Activated CD8-positive, alpha-beta T cell treated with anti-CD3 and anti-CD28 coated beads for 36 hours (primary cell): ENCODE measurements at regions of chr20 and their contacts with region 1.

Region 1: DNA sequence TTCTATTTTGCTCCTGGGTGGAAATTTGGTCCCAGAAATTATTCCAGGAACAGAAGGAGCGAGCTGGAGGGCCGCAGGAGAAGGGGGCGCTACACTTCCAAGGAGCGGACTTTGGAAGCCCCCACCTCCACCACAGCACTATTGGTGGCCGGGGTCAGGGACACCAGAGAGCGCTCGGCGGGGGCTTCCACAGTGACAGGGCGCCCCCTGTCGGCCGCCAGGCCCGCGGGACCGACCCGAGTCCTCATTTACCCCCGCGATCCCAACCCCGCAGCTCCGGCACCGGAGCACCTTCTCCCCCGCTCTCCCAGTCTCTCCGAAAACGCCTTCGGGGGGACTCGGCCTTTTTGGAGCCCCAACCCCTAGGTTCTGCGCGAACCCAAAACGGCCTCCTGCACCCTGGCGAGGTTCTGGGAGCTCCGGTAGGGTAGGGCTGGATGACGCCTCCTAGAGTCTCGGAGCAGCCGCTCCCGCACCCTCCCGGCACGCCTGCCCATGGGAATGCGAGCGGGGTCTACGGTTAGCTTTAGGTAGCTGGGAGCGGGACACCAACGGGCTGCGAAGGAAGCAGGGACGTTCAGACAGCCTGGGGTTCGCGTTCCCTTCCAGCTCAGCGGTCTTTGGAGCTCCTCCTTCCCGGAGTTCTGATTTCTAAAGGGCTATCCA is 2.4 kb upstream of the FOXA2 start:
- DNase-seq: peak; percentile 45
- ATAC-seq: no peak
- H3K4me3 Mint-ChIP-seq: no peak overlapping the region
- H3K27ac Mint-ChIP-seq: no peak overlapping the region
- H3K4me1 Mint-ChIP-seq: peaks cover 2% of the 10 kb centered on the region
- H3K27me3 Mint-ChIP-seq: peaks cover 52% of the 10 kb centered on the region
- CTCF ChIP-seq: peak; percentile 47

Region 2: DNA sequence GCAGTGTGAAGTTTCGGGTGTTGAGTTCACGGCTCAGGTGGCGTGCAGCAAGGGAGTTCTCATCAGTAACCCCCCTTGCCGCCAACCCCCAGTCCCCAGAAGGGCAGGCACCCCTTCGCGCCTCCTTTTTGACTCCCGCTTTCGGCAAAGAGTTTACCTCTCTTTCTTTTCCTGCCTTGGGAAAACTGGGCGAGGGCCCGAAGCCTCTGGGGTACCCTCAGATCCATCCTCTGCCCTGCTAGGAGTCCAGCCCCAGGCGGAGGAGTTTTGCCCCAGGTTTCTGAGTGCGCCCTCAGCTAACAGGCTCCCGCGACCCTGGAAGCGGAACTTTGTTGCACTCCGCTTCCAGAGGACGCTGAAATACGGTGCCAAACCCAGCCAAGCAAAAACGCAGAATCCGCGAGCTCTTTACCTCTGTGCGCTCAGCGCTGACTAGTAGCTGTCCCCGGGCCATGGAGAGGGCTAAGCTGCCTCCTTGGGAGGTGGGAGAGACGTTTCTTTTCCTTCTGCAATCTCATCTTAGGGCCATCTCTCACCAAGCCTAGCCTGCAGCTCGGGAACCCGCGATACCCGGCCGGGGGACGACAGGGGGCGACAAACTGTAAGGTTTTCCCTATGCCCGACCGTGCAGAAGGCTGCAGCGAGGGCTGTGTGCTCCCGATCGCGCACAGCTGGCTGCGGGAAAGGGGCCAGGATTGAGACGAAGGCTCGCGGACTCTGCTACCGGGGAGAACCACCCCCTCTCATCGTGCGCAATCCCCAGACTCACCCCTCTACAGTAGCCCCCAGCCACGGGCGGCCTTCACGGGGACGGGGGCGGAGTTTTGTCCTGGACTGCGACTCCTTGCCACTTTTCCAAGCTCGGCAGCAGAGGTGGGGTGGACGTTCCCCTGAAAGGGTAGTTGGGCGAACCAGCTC is 884.0 kb before region 1 on chr20:
- CTCF ChIA-PET with region 1: no interaction called
- POLR2A ChIA-PET with region 1: no interaction called
- intact Hi-C with region 1: loop called (anchors 10 kb)
- DNase-seq: peak; percentile 66
- ATAC-seq: peak; percentile 45
- H3K4me3 Mint-ChIP-seq: no peak overlapping the region
- H3K27ac Mint-ChIP-seq: no peak overlapping the region
- H3K4me1 Mint-ChIP-seq: peaks cover 3% of the 10 kb centered on the region
- H3K27me3 Mint-ChIP-seq: peaks cover 75% of the 10 kb centered on the region
- CTCF ChIP-seq: peak; percentile 46

Region 3: DNA sequence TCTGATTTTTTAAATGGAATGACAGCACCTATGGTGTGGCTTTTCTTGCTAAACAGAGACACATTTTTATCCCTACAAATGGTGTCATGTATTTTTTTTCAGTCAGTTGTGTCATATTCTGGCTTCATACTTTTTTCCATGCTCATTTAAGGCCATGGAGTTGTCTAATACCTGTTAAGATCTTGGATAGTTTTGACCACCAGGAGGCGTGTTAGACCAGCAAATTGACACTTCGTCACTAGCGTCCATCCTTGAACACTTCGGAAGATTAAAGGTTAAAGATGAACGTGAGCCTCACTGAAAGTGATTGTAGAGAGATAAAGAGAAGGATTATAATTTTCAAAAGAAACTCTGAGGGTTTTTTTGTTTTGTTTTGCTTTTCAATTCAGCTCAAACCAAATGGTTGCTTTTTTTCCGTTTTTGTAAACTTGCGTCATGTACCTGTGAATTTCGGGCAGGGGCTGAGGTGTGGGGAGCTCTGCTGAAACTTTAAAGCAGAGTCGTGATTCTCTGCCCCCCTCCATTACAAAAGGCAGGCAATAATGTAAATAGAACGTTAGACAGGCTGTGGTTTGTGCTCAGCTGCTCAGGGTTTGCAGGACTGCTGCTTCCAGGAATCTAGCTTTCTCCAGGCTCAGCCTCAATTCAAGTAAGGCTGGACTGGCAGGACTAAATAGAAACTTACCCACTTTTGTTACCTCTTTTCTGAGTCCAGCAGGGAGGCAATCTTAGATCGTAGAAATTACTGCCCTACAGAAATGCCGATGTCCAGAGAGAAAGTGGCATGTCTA is 247.5 kb before region 1 on chr20:
- CTCF ChIA-PET with region 1: interaction called, 23 read pairs
- POLR2A ChIA-PET with region 1: no interaction called
- intact Hi-C with region 1: loop called (anchors 10 kb)
- DNase-seq: peak; percentile 66
- ATAC-seq: peak; percentile 60
- H3K4me3 Mint-ChIP-seq: no peak overlapping the region
- H3K27ac Mint-ChIP-seq: no peak overlapping the region
- H3K4me1 Mint-ChIP-seq: no peaks in the 10 kb centered on the region
- H3K27me3 Mint-ChIP-seq: peaks cover 6% of the 10 kb centered on the region
- CTCF ChIP-seq: peak; percentile 86

Region 4: GRCh38 chr20:22346716-22347115 is 240.1 kb before region 1 on chr20:
- CTCF ChIA-PET with region 1: interaction called, 3 read pairs
- POLR2A ChIA-PET with region 1: no interaction called
- intact Hi-C with region 1: loop called (anchors 10 kb)
- DNase-seq: no peak
- ATAC-seq: no peak
- H3K4me3 Mint-ChIP-seq: no peak overlapping the region
- H3K27ac Mint-ChIP-seq: no peak overlapping the region
- H3K4me1 Mint-ChIP-seq: no peaks in the 10 kb centered on the region
- H3K27me3 Mint-ChIP-seq: no peaks in the 10 kb centered on the region
- CTCF ChIP-seq: no peak

Region 5: GRCh38 chr20:22403632-22404361 is 183.0 kb before region 1 on chr20:
- CTCF ChIA-PET with region 1: no interaction called
- POLR2A ChIA-PET with region 1: no interaction called
- intact Hi-C with region 1: no loop called
- DNase-seq: no peak
- ATAC-seq: no peak
- H3K4me3 Mint-ChIP-seq: peak overlapping the region; percentile 5
- H3K27ac Mint-ChIP-seq: no peak overlapping the region
- H3K4me1 Mint-ChIP-seq: peaks cover 7% of the 10 kb centered on the region
- H3K27me3 Mint-ChIP-seq: peaks cover 10% of the 10 kb centered on the region
- CTCF ChIP-seq: no peak

Region 6: DNA sequence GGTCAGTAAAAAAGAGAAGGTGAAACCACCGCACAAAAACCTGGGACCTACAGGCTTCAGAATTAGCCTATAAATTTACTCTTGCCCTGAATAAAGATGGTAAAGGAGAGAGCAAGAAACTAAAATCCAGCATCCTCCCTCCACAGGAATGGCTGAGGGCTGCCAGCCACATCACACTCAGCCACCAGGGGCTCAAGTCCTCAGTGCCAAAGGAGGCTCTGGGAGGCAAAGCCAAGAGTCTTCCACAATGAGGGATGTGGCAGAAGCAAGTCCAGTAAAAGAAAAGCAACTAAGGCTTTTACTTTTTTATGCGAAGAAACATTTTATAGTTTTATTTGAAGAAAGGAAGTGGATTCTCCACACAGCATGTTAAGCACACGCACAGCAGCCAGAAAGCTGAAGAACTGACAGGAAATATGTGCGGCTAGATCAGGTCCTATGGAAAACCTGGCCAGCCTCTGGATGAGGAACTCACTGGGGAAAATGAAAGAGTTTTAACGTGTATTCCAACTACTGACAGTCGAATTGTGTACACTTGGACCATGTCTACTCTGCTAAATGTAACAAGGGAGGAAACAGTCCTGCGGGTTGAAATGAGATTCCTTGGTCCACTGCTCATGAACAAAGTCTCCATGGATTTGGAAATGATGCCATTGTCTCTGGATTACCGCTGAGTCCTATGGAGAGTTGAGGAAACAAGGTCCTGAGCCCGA is 229.0 kb after region 1 on chr20:
- CTCF ChIA-PET with region 1: no interaction called
- POLR2A ChIA-PET with region 1: no interaction called
- intact Hi-C with region 1: no loop called
- DNase-seq: no peak
- ATAC-seq: no peak
- H3K4me3 Mint-ChIP-seq: no peak overlapping the region
- H3K27ac Mint-ChIP-seq: no peak overlapping the region
- H3K4me1 Mint-ChIP-seq: no peaks in the 10 kb centered on the region
- H3K27me3 Mint-ChIP-seq: peaks cover 3% of the 10 kb centered on the region
- CTCF ChIP-seq: no peak